Posterior vena cava (tissue), 2 donors: ENCODE measurements at regions of chr4 and their contacts with region 1.

Region 1: DNA sequence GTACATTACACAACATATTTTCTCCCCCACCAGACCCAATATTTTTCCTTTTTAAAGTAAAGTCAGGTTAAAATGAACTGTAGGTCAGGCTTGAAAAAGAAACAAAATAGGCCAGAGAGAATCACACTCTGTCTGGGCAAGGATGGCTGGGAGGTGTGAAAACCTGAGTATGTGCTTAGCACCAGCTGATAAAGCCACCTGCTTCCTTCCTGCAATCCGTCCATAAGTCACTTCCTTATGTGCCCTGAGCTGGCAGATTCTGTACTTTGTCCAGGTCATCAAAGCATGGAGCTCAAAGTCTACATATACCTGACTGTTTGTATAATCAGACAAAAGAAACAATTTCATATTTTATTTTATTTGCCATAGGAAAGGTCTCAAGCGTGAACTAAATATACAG is 37.7 kb downstream of the ANTXR2 start:
- DNase-seq: no peak

Region 2: DNA sequence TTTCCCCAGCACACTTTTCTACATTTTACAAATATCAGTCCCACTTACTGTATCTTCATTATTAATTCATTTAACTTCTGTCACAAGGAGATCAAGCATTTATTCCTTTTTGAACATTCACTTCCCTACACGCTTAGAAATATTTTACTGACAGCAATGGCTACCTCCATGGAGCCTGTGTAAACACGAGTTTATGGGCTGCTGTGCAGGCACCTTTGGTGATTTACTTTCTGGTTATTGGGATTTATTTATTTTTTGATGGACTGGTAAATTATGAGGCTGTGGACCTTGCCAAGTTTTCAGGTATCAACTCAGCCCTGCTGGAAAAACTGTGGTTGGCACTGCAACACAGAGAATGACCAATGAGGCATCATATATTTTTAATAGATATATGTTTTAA is 1050.7 kb before region 1 on chr4:
- intact Hi-C with region 1: no loop called
- DNase-seq: no peak

Region 3: GRCh38 chr4:80022282-80022681 is 13.1 kb before region 1 on chr4:
- intact Hi-C with region 1: no loop called
- DNase-seq: no peak

Region 4: DNA sequence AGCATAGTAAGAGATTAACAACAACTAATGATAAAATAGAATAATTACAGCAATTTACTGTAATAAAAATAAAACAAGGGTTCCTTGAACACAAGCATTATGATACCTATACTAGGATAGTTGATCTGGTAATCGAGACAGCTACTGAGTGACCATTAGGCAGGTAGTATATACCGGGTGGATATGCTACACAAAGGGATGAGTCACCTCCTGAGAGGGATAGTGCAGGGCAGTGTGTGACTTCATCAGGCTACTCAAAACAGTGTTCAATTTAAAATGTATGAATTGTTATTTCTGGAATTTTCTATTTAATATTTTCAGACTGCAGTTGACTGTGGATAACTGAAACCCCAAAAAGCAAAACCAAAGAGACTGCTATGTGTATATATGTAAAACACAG is 47.4 kb after region 1 on chr4:
- intact Hi-C with region 1: loop called in 1 of 2 experiments (anchors 1 kb)
- DNase-seq: no peak

Region 5: DNA sequence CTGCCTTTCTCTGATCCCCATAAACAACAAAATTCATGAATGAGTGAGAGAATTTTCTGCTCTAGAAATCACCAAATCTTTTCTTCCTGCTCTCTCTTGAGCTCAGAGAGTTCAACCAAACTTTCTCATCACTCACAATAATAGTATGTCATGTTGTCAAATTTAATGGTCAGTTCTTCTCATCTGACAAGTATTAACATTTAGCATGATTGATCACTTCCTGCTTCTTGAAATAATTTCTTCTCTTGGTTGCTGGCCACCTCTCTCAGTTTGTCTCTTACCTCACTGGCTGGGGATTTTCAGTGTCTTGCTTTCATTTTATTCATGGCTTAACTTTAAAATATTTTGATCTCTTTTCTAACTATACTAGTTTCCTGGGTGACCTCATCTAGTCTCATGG is 205.6 kb after region 1 on chr4:
- intact Hi-C with region 1: no loop called
- DNase-seq: no peak